OCI-LY7 (cell line): ENCODE measurements at regions of chr16 and their contacts with region 1.

Region 1: DNA sequence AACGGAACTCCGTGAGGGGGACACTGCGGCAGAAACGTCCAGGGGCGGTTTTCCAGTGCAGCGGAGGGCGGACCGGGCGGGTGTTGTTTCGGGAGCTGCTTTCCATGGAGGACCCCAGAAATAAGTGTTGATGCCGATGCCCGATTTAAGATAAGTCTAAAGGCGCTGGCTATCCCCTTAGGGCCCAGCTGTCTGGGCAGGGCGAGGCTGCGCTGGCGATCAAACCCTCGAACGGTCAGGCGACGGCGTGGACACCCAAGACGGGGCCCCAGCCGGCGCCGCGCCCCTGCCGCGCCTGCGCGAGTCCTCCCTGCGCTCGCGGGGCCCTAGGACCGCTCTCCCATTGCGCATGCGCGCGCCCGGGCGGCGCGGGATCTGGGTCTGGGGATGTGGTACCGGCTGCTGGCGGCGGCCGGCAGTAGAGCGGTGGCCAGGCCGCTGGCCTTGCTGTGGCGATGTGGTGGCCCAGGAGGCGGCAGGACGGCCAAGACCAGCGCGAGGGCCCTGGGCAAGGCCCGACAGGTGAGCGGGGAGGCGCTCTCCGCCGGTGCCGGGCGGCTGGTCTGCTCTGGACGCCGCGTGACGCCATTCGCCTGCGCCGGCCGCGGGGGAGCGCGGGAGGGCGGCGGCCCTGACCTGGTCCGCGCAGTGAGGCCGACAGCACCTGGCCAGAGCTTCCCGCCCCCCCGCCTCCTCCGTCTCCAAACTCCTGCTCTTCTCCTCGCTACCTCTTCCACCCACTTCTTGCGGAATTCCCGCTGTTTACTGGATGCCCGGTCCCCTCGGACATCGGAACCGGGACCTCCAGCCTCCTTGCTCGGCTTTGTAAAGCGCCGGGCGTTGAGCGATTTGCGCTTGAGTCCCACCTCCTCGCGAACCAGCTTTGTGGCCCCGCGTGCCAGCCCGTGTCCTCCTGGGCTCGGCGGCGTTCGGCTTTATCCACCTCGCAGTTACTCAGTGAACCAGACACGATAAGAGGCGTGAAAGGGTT is 24.0 kb downstream of the DEF8 start:
- DNase-seq: peak; percentile 95
- H3K4me3 ChIP-seq: peak overlapping the region; percentile 84
- H3K27ac ChIP-seq: peak overlapping the region; percentile 50
- H3K4me1 ChIP-seq: peaks cover 38% of the 10 kb centered on the region
- CTCF ChIP-seq: no peak; the same call in 1 of the 2 replicates

Region 2: GRCh38 chr16:89828199-89828778 is 144.2 kb before region 1 on chr16 and contains the start of gene SPIRE2:
- CTCF ChIA-PET with region 1: no interaction called
- POLR2A ChIA-PET with region 1: no interaction called
- intact Hi-C with region 1: no loop called
- DNase-seq: peak; percentile 63
- H3K4me3 ChIP-seq: peak within 1 kb of the TSS; percentile 40
- H3K27ac ChIP-seq: no peak within 1 kb of the TSS
- H3K4me1 ChIP-seq: no peaks in the 10 kb centered on the region
- CTCF ChIP-seq: no peak
- total RNA-seq, gene SPIRE2: 7.1 and 9.4 TPM in 2 replicates

Region 3: DNA sequence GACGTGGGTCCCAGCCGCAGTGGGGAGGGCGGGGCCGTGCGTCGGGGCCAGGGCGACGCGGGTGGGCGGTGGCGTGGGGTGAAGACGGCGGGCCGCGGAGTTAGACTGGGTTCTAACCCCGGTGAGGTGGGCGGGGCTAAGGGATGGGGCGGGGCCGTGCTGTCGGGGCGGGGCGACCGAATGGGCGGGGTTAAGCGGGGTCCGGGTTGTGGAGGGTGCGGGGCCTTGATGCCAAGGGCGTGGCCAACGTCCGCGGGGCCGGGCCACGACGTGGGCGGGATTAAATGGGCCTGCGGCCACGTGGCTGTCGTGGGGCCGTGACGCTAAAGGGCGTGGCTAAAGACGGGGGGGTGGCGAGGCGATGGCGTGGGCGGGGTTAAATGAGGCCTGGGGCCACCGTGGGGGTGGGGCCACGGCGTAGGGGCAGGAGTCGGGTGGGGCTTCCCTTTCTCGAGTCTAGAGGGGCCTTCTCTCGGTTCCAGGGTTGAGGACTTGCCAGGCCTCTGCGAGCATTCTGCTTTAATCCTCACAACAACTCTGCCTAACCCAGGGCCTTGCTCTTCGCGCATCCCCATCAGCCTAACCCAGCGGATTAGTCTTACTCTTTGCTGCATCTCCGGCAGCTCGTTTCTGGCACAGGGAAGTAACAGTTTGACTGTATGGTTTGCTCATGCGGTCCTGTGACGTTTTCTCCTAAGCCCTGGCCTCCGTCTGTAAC is 98.4 kb before region 1 on chr16:
- CTCF ChIA-PET with region 1: no interaction called
- POLR2A ChIA-PET with region 1: no interaction called
- intact Hi-C with region 1: loop called (anchors 1 kb)
- DNase-seq: peak; percentile 92
- H3K4me3 ChIP-seq: peak overlapping the region; percentile 89
- H3K27ac ChIP-seq: peak overlapping the region; percentile 89
- H3K4me1 ChIP-seq: peaks cover 20% of the 10 kb centered on the region
- CTCF ChIP-seq: no peak

Region 4: GRCh38 chr16:90032688-90033331 is 60.3 kb after region 1 on chr16:
- CTCF ChIA-PET with region 1: no interaction called
- POLR2A ChIA-PET with region 1: no interaction called
- intact Hi-C with region 1: no loop called
- DNase-seq: no peak
- H3K4me3 ChIP-seq: no peak overlapping the region
- H3K27ac ChIP-seq: no peak overlapping the region
- H3K4me1 ChIP-seq: no peaks in the 10 kb centered on the region
- CTCF ChIP-seq: no peak